Sigmoid colon (tissue), 7 donors: ENCODE measurements at regions of chr11 and their contacts with region 1.

Region 1: DNA sequence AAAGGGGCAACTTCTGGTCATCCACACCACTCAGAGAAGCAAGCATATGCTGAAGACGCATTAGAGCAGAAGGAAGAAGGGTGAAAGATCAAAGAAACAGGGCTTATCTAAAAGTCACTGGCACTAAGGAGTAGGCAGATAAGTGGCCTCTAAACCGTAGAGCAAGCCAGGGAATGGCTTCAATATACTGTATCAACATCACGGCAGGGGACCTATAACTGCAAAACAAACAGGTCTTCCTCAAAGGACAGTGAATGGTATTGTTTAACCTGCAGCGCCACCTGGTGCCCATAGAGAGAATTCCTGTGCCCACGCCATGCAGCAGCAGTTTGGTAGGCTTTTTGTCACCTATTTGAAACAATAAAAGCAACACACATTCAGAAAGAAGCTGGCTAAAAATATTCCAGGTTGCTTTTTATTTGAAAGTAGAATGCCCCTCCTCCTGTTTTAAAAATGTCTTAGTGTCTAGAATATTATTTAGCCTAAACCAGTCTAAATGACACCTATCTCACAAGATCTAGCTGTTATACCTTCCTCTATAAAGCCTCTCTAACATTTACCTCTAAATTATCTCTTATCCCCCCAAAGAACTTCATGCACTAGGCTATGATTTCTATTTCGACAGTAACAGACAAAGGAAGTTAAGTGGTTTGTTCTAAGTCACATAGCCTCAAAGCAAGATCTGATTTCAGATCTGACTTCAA is 21.8 kb downstream of the SNX19 start:
- DNase-seq: peak; percentile 88
- H3K4me3 ChIP-seq: no peak overlapping the region
- H3K27ac ChIP-seq: peak overlapping the region; percentile 87 to 95 (median 90)
- H3K4me1 ChIP-seq: peaks cover 0 to 77% (median 63%) of the 10 kb centered on the region in 4 donors
- H3K27me3 ChIP-seq: no peaks in the 10 kb centered on the region
- CTCF ChIP-seq: peak; percentile 80 to 92 (median 87)
- EP300 ChIP-seq: no peak
- POLR2A ChIP-seq: no peak

Region 2: DNA sequence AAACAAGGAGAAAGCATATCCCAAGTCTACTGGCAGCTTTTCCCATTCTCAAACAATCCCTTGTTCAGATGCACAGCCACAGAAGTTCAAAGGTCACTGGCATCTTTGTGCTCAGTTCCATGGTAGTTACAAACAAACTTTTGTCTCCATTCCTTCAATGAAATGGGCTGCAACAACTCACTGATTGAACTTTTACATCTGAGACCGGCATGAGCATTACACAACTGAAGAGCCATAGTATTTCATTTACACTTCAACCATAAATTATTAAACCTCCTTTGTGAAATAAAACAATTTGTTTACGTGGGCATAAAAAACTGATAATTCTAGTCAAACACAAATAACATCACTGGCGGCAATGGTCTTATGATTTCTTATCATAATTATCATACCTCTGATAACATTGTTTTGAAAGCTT is 1634.5 kb before region 1 on chr11:
- intact Hi-C with region 1: no loop called
- DNase-seq: no peak
- H3K4me3 ChIP-seq: no peak overlapping the region
- H3K27ac ChIP-seq: no peak overlapping the region
- H3K4me1 ChIP-seq: peaks cover 0 to 14% (median 3%) of the 10 kb centered on the region in 4 donors
- H3K27me3 ChIP-seq: no peaks in the 10 kb centered on the region
- CTCF ChIP-seq: no peak
- EP300 ChIP-seq: no peak
- POLR2A ChIP-seq: no peak

Region 3: DNA sequence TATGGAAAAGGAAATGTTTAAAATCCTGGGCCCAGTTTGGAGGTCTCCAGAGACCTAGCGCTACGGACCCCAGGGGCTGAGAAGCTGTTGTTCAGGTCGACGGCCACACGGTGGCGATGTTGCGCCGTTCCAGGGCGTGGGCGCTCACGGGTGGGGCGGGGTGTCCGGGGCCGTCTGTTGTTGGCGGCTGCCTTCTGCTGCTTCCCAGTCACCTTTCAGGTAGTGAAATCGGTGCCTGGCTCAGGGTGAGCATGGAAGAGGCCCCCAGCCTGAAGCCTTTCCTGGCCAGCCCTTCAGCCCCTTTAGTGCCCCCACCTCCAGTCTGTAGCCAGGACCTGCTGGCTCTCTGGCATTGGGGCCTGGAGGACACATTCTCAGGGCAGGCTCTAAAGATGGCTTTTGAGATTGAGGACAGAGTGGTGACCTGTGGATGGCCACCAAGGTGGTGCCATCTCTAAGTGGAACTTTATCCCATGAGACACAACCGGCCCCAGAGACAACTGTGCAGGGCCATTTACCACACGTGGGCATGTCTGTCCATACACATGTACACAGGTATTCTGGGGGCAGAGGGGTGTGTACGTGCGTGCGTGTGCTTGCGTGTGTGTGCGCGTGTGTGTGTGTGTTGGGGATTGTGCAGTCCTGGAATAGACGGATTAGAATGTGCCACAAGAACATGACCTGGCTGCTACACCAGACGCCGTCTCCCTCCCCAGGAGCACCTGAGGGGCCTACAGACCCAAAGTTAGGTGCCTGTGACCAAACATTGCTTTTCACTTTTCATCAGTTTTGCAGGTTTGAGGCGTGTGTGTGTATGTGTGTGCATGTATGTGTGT is 681.1 kb before region 1 on chr11:
- intact Hi-C with region 1: loop called (anchors 10 kb)
- DNase-seq: peak; percentile 77
- H3K4me3 ChIP-seq: no peak overlapping the region
- H3K27ac ChIP-seq: no peak overlapping the region
- H3K4me1 ChIP-seq: peaks cover 0 to 8% (median 0%) of the 10 kb centered on the region in 4 donors
- H3K27me3 ChIP-seq: no peaks in the 10 kb centered on the region
- CTCF ChIP-seq: peak; percentile 89 to 95 (median 90)
- EP300 ChIP-seq: no peak
- POLR2A ChIP-seq: no peak

Region 4: DNA sequence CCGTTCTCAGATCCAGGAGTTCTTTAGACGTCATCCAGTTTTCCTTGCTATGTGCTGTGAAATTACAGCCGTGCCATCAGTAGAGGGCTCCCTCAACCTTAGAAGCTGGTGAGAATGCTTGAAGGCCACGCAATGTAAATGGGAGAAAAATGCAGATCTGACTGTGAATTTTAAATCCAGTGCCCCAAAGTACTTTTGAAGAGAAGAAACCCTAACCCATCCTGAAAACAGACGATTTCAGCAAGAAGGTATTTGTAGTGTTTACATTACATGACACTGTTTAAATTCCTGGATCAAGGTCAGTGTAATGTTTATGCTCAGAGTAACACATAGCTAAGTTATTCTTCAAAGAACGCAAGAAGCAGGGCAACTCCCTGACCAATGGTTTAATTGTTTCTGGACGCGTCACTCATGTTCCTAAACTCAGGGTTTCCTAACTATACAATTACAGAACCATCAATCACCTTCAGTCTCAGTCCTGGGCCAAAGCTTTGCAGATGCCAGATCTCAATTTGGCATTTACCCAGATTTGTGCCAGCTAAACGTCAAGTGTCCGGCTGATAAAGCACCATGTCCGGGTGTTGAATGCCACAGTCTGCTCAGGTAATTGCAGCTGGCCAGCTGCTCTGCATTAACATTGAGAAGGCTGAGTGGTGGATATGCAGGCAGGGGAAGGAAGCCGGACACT is 504.3 kb before region 1 on chr11:
- intact Hi-C with region 1: loop called (anchors 2 kb)
- DNase-seq: no peak
- H3K4me3 ChIP-seq: no peak overlapping the region
- H3K27ac ChIP-seq: peak overlapping the region; percentile 66 to 78 (median 76)
- H3K4me1 ChIP-seq: peaks cover 0 to 50% (median 44%) of the 10 kb centered on the region in 4 donors
- H3K27me3 ChIP-seq: no peaks in the 10 kb centered on the region
- CTCF ChIP-seq: peak in 3 of 4 experiments; percentile 4 to 37 (median 35)
- EP300 ChIP-seq: peak; percentile 26 to 92 (median 75)
- POLR2A ChIP-seq: no peak

Region 5: DNA sequence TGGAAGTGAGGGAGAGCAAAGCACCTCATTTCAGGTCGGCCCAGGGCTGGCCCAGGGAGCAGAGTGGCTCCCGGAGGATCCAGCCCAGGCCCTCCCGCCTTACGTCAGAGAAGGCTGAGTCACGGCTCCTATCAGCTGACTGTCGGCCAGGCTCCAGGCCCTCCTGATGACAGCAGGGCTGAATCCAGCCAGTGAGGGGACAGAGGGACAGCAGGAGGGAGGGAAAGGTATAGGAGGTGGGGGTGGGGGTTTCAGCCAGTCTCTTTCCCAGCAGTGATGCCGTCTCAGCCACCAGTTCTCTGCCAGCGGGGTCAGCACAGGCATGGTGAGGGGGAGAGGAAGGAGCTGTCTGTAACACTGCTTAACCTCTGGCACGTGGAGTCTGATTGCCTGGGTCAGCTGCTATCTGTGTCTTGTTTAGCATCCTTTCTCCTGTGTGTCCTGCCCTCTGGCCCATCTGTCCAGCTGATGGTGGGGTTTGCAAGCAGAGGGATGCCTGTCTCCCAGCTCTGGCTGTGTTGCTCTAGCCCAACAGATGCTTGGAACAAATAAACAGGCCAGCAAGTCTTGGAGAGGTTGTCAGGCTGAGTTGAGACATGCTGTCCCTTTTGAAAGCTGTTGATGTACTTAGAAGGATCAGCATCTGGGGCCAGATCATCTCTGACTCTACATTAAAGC is 372.1 kb before region 1 on chr11:
- intact Hi-C with region 1: loop called (anchors 5 kb)
- DNase-seq: peak; percentile 98
- H3K4me3 ChIP-seq: no peak overlapping the region
- H3K27ac ChIP-seq: peak overlapping the region; percentile 71 to 81 (median 76)
- H3K4me1 ChIP-seq: peaks cover 2 to 30% (median 25%) of the 10 kb centered on the region in 4 donors
- H3K27me3 ChIP-seq: no peaks in the 10 kb centered on the region
- CTCF ChIP-seq: no peak
- EP300 ChIP-seq: peak in 2 of 4 donors; percentile 88 to 93
- POLR2A ChIP-seq: no peak

Region 6: GRCh38 chr11:130861902-130862860 is 32.3 kb before region 1 on chr11:
- intact Hi-C with region 1: loop called (anchors 1 kb)
- DNase-seq: peak; percentile 95
- H3K4me3 ChIP-seq: peak overlapping the region in 1 of 4 donors; percentile 5
- H3K27ac ChIP-seq: peak overlapping the region in 1 of 4 donors; percentile 11
- H3K4me1 ChIP-seq: peaks cover 0 to 29% (median 11%) of the 10 kb centered on the region in 4 donors
- H3K27me3 ChIP-seq: no peaks in the 10 kb centered on the region
- CTCF ChIP-seq: peak; percentile 100
- EP300 ChIP-seq: no peak
- POLR2A ChIP-seq: no peak